Naive thymus-derived CD4-positive, alpha-beta T cell (primary cell): ENCODE measurements at regions of chr5 and their contacts with region 1.

Region 1: DNA sequence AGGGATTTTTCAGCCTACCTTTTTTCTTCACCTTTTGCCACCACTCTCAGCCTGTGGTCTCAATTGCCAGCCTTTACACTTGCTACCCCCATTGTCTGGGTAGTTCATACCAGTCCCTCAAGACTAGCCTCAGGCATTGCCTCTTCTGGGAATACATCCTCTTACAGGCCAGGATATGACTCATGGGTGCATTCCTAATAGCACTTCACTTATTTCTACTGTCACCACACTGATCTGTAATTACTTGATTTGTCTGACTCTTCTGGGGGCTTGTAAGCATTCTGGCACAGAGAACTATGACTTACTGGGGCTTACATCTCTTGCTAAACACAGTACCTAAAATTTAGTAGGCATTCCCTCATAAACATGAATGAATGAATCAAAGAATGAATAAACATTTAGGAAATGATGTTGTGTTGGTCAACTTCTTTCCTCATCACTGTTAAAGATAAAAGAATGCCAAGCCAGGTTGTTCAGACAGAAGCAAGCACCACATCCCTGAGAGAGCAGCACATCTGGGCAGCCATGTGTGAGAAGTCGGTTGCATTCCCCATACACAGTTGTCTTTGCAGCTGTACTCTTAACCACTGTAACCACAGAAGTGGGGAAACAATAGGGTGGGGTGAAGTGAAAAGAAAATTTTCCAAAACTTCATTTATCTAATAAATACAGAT is 27.6 kb downstream of the IL7R start:
- DNase-seq: no peak
- ATAC-seq: peak; percentile 57
- H3K4me3 ChIP-seq: no peak overlapping the region
- H3K4me3 Mint-ChIP-seq: peak overlapping the region in 8 of 10 donors; percentile 2 to 62 (median 18)
- H3K27ac ChIP-seq: no peak overlapping the region
- H3K27ac Mint-ChIP-seq: peak overlapping the region in 8 of 9 donors; percentile 5 to 90 (median 68)
- H3K4me1 ChIP-seq: peaks cover 10 to 25% of the 10 kb centered on the region in 2 donors
- H3K4me1 Mint-ChIP-seq: peaks cover 37 to 56% (median 51%) of the 10 kb centered on the region in 7 donors
- H3K27me3 ChIP-seq: no peaks in the 10 kb centered on the region
- H3K27me3 Mint-ChIP-seq: no peaks in the 10 kb centered on the region

Region 2: GRCh38 chr5:35869685-35870277 is 14.5 kb before region 1 on chr5:
- CTCF ChIA-PET with region 1: no interaction called
- POLR2A ChIA-PET with region 1: interaction called, 97 read pairs
- intact Hi-C with region 1: loop called in 1 of 2 experiments (anchors 1 kb)
- DNase-seq: no peak
- ATAC-seq: no peak
- H3K4me3 ChIP-seq: no peak overlapping the region
- H3K4me3 Mint-ChIP-seq: peak overlapping the region in 7 of 10 donors; percentile 44 to 87 (median 51)
- H3K27ac ChIP-seq: peak overlapping the region; percentile 65
- H3K27ac Mint-ChIP-seq: peak overlapping the region; percentile 47 to 97 (median 86)
- H3K4me1 ChIP-seq: peaks cover 41 to 54% of the 10 kb centered on the region in 2 donors
- H3K4me1 Mint-ChIP-seq: peaks cover 46 to 99% (median 93%) of the 10 kb centered on the region in 7 donors
- H3K27me3 ChIP-seq: no peaks in the 10 kb centered on the region
- H3K27me3 Mint-ChIP-seq: no peaks in the 10 kb centered on the region